Heart left ventricle (tissue), 16 donors: ENCODE measurements at regions of chr4 and their contacts with region 1.

Region 1: GRCh38 chr4:149884046-149884445 is 68.4 kb upstream of the IQCM start:
- DNase-seq: peak in 4 of 5 donors; percentile 14 to 64 (median 46)
- ATAC-seq: peak; percentile 69 to 92 (median 85)
- H3K4me3 ChIP-seq: no peak overlapping the region
- H3K27ac ChIP-seq: peak overlapping the region in 1 of 12 donors; percentile 4
- H3K4me1 ChIP-seq: peaks cover 0 to 13% (median 0%) of the 10 kb centered on the region in 12 donors
- H3K27me3 ChIP-seq: no peaks in the 10 kb centered on the region
- CTCF ChIP-seq: no peak
- POLR2A ChIP-seq: no peak

Region 2: DNA sequence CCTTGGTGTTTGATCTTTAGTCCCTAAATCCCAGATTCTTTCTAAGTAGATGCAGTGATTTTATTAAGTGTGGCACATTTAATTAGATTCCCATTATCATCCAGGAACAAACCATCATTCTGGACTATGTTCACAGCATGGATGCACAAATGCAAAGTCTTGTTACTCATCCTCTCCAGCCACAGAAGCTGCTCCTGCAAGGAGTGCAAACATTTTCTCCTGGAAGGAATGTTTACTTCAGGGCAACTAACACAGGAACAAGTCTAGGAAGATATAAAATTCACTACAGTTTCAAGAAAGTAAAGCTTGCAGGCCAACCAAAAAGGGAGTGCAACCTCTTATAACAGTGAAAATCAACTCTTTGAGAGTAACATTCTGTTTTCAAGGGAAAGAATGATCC is 174.4 kb before region 1 on chr4:
- intact Hi-C with region 1: loop called in 1 of 10 experiments (anchors 10 kb)
- DNase-seq: no peak
- ATAC-seq: no peak
- H3K4me3 ChIP-seq: no peak overlapping the region
- H3K27ac ChIP-seq: no peak overlapping the region
- H3K4me1 ChIP-seq: peaks cover 0 to 22% (median 3%) of the 10 kb centered on the region in 12 donors
- H3K27me3 ChIP-seq: no peaks in the 10 kb centered on the region
- CTCF ChIP-seq: no peak
- POLR2A ChIP-seq: no peak

Region 3: DNA sequence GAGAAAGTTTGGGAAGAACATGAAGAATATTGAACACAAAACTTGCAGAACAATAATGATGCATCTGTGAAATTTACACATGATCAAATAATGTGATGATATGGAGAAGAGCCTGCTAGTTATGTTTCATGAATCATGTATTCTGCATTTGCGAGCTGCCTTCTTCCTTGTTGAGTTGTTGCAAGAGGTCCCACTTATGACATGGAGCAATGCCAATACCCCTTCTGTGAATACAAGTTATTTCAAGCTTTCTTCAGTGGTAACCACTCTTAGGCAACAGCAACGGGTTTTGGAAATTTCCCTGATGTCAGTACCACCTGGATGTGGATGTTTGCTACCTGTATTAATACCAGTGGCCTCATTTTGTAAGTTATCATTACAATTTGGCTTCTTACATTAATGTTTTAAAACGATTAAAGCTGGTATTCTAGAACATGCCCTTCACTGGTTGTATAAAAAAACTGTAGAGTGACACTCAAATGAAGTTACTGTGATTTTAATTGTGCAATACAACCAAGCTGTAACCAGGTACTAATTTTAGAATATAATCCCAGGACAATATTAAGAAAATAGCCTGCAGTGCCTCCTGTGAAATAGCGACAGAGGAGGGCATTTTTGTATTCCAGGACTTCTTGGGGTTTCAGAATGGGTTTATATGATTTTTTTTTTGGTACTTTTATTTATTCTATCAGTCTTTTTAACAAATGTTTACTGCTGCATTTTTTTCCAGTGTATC is 93.7 kb before region 1 on chr4:
- intact Hi-C with region 1: loop called in 2 of 10 experiments (anchors 5 kb)
- DNase-seq: no peak
- ATAC-seq: peak in 1 of 4 donors; percentile 53
- H3K4me3 ChIP-seq: no peak overlapping the region
- H3K27ac ChIP-seq: no peak overlapping the region
- H3K4me1 ChIP-seq: peaks cover 0 to 4% (median 0%) of the 10 kb centered on the region in 12 donors
- H3K27me3 ChIP-seq: no peaks in the 10 kb centered on the region
- CTCF ChIP-seq: no peak
- POLR2A ChIP-seq: no peak

Region 4: DNA sequence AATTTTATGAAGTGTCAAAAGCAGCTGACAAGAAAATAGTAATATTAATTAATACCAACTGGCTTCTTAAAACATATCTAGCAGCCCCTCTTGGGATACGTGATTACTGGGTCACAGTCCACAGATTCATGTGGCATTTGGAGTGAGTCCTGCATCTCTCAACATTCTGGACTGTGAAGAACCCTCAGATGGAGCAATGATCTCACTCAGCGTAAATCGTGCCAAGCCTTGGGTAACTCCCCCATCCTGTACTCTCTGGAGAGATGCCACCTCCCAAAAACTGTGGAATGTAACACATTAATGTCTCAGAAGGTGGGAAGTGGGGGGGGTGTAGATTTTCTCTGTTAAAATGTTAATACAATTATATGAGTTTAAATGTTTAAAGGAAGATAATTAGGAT is 49.8 kb after region 1 on chr4:
- intact Hi-C with region 1: no loop called
- DNase-seq: no peak
- ATAC-seq: peak in 2 of 4 donors; percentile 54 to 55
- H3K4me3 ChIP-seq: no peak overlapping the region
- H3K27ac ChIP-seq: no peak overlapping the region
- H3K4me1 ChIP-seq: no peaks in the 10 kb centered on the region
- H3K27me3 ChIP-seq: no peaks in the 10 kb centered on the region
- CTCF ChIP-seq: no peak
- POLR2A ChIP-seq: no peak